Activated CD8-positive, alpha-beta T cell treated with anti-CD3 and anti-CD28 coated beads, Interleukin-2, amount 10 ng/mL, durations not matched to agents 7 days and 5 days (primary cell): ENCODE measurements at regions of chr1 and their contacts with region 1.

Region 1: GRCh38 chr1:93345633-93346420 is at the start of gene DR1:
- DNase-seq: peak; percentile 93
- ATAC-seq: peak; percentile 71
- H3K4me3 Mint-ChIP-seq: peak within 1 kb of the TSS; percentile 91
- H3K27ac Mint-ChIP-seq: peak within 1 kb of the TSS; percentile 98
- H3K4me1 Mint-ChIP-seq: peaks cover 19% of the 10 kb centered on the region
- H3K27me3 Mint-ChIP-seq: no peaks in the 10 kb centered on the region
- total RNA-seq, gene DR1: 94.0 to 94.1 TPM

Region 2: GRCh38 chr1:93042187-93043056 is 303.4 kb before region 1 on chr1:
- CTCF ChIA-PET with region 1: interaction called, 3 read pairs
- POLR2A ChIA-PET with region 1: interaction called, 12 read pairs
- DNase-seq: peak; percentile 67
- ATAC-seq: peak; percentile 98
- H3K4me3 Mint-ChIP-seq: peak overlapping the region; percentile 77
- H3K27ac Mint-ChIP-seq: peak overlapping the region; percentile 93
- H3K4me1 Mint-ChIP-seq: peaks cover 31% of the 10 kb centered on the region
- H3K27me3 Mint-ChIP-seq: no peaks in the 10 kb centered on the region

Region 3: GRCh38 chr1:93328809-93329760 is 16.7 kb before region 1 on chr1:
- CTCF ChIA-PET with region 1: interaction called, 3 read pairs
- POLR2A ChIA-PET with region 1: interaction called, 10 read pairs
- DNase-seq: no peak
- ATAC-seq: no peak
- H3K4me3 Mint-ChIP-seq: no peak overlapping the region
- H3K27ac Mint-ChIP-seq: no peak overlapping the region
- H3K4me1 Mint-ChIP-seq: no peaks in the 10 kb centered on the region
- H3K27me3 Mint-ChIP-seq: no peaks in the 10 kb centered on the region

Region 4: GRCh38 chr1:93493746-93494145 is 147.9 kb after region 1 on chr1:
- CTCF ChIA-PET with region 1: no interaction called
- POLR2A ChIA-PET with region 1: no interaction called
- DNase-seq: no peak
- ATAC-seq: no peak
- H3K4me3 Mint-ChIP-seq: no peak overlapping the region
- H3K27ac Mint-ChIP-seq: no peak overlapping the region
- H3K4me1 Mint-ChIP-seq: no peaks in the 10 kb centered on the region
- H3K27me3 Mint-ChIP-seq: peaks cover 11% of the 10 kb centered on the region